ENCODE measurements at regions of chr10 and their contacts with region 1.

Region 1: GRCh38 chr10:30359373-30360206 is 10.5 kb upstream of the MTPAP start:
- DNase-seq: peak; percentile 90 to 93
- H3K4me3 ChIP-seq: no peak overlapping the region
- H3K4me3 Mint-ChIP-seq: no peak overlapping the region
- H3K27ac Mint-ChIP-seq: no peak overlapping the region
- H3K4me1 ChIP-seq: no peaks in the 10 kb centered on the region
- H3K4me1 Mint-ChIP-seq: peaks cover 7% of the 10 kb centered on the region
- H3K27me3 ChIP-seq: no peaks in the 10 kb centered on the region
- H3K27me3 Mint-ChIP-seq: peaks cover 3% of the 10 kb centered on the region
- CTCF ChIP-seq: peak; percentile 97

Region 2: DNA sequence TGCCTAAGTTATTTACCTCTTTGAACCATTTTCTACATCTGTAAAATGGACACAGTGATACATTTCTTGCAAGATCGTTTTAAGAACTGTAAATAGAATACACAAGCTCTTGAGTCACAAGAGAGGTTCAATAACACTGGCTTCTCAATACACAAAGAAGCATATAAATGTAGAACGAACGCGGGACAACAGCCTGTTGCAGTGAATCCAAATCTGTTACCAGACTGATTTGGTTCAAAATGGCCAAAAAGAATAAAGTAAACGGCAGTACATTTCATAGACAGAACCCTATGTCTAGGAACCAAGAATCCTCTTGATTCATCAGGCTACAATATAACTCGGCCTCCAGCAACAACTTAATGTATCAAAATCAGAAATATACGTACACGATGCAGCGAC is 11.2 kb before region 1 on chr10:
- CTCF ChIA-PET with region 1: interaction called, 18 read pairs
- POLR2A ChIA-PET with region 1: no interaction called
- intact Hi-C with region 1: no loop called
- DNase-seq: no peak
- H3K4me3 ChIP-seq: peak overlapping the region; percentile 100
- H3K4me3 Mint-ChIP-seq: peak overlapping the region; percentile 93
- H3K27ac Mint-ChIP-seq: peak overlapping the region; percentile 96
- H3K4me1 ChIP-seq: peaks cover 11% of the 10 kb centered on the region; the same call in 1 of the 2 replicates
- H3K4me1 Mint-ChIP-seq: peaks cover 28% of the 10 kb centered on the region
- H3K27me3 ChIP-seq: no peaks in the 10 kb centered on the region
- H3K27me3 Mint-ChIP-seq: no peaks in the 10 kb centered on the region
- CTCF ChIP-seq: no peak

Region 3: DNA sequence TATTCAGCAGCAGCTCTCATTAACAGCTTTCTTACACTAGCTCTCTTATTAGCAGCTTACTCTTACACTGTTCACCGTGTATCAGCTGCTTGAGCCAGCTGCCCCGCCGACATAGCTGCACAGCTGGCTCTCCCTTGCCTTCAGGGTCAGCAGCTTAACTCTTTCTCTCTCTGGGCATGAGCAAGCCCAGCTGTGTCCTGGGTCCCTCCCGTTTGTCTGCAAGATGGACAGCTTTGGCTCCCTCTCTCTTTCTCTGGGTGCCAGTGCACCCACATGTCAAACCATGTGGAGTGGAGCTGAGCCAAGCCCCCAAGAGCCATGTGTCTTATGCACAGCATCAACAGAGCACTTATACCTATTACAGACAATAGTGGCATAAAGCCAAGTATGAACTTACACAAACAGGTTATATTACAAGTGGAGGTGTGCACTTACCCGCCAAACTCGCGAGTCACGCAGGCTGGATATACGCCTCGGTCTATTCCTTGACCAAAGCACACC is 25.2 kb after region 1 on chr10:
- CTCF ChIA-PET with region 1: interaction called, 36 read pairs
- POLR2A ChIA-PET with region 1: no interaction called
- intact Hi-C with region 1: loop called (anchors 1 kb)
- DNase-seq: peak in 1 of 2 experiments; percentile 55
- H3K4me3 ChIP-seq: no peak overlapping the region
- H3K4me3 Mint-ChIP-seq: no peak overlapping the region
- H3K27ac Mint-ChIP-seq: no peak overlapping the region
- H3K4me1 ChIP-seq: no peaks in the 10 kb centered on the region
- H3K4me1 Mint-ChIP-seq: peaks cover 6% of the 10 kb centered on the region
- H3K27me3 ChIP-seq: no peaks in the 10 kb centered on the region
- H3K27me3 Mint-ChIP-seq: peaks cover 18% of the 10 kb centered on the region
- CTCF ChIP-seq: peak in 1 of 2 experiments; percentile 72

Region 4: GRCh38 chr10:30583778-30584415 is 224.3 kb after region 1 on chr10:
- CTCF ChIA-PET with region 1: interaction called, 5 read pairs
- POLR2A ChIA-PET with region 1: no interaction called
- intact Hi-C with region 1: loop called (anchors 1 kb)
- DNase-seq: no peak
- H3K4me3 ChIP-seq: no peak overlapping the region
- H3K4me3 Mint-ChIP-seq: peak overlapping the region; percentile 16
- H3K27ac Mint-ChIP-seq: no peak overlapping the region
- H3K4me1 ChIP-seq: no peaks in the 10 kb centered on the region
- H3K4me1 Mint-ChIP-seq: peaks cover 6% of the 10 kb centered on the region
- H3K27me3 ChIP-seq: no peaks in the 10 kb centered on the region
- H3K27me3 Mint-ChIP-seq: no peaks in the 10 kb centered on the region
- CTCF ChIP-seq: no peak

Region 5: GRCh38 chr10:30591249-30591670 is 231.7 kb after region 1 on chr10:
- CTCF ChIA-PET with region 1: interaction called, 42 read pairs
- POLR2A ChIA-PET with region 1: no interaction called
- intact Hi-C with region 1: loop called (anchors 1 kb)
- DNase-seq: peak in 1 of 2 experiments; percentile 61
- H3K4me3 ChIP-seq: no peak overlapping the region
- H3K4me3 Mint-ChIP-seq: no peak overlapping the region
- H3K27ac Mint-ChIP-seq: no peak overlapping the region
- H3K4me1 ChIP-seq: no peaks in the 10 kb centered on the region
- H3K4me1 Mint-ChIP-seq: peaks cover 6% of the 10 kb centered on the region
- H3K27me3 ChIP-seq: no peaks in the 10 kb centered on the region
- H3K27me3 Mint-ChIP-seq: peaks cover 6% of the 10 kb centered on the region
- CTCF ChIP-seq: peak; percentile 81 to 84

Measured in Caco-2 (cell line).